Naive thymus-derived CD4-positive, alpha-beta T cell (primary cell): ENCODE measurements at regions of chr10 and their contacts with region 1.

Region 1: GRCh38 chr10:78302989-78303854 is 269.6 kb downstream of the RPS24 start:
- DNase-seq: peak; percentile 89 to 98 (median 94)
- ATAC-seq: peak; percentile 92
- H3K4me3 ChIP-seq: peak overlapping the region; percentile 92
- H3K4me3 Mint-ChIP-seq: peak overlapping the region; percentile 90 to 99 (median 96)
- H3K27ac ChIP-seq: peak overlapping the region; percentile 87
- H3K27ac Mint-ChIP-seq: peak overlapping the region; percentile 94 to 99 (median 97)
- H3K4me1 ChIP-seq: peaks cover 10 to 11% of the 10 kb centered on the region in 2 donors
- H3K4me1 Mint-ChIP-seq: peaks cover 6 to 34% (median 19%) of the 10 kb centered on the region in 7 donors
- H3K27me3 ChIP-seq: no peaks in the 10 kb centered on the region
- H3K27me3 Mint-ChIP-seq: peaks cover 0 to 23% (median 0%) of the 10 kb centered on the region in 5 donors

Region 2: GRCh38 chr10:78029269-78030226 is 273.7 kb before region 1 on chr10 and contains the start of gene POLR3A:
- CTCF ChIA-PET with region 1: no interaction called
- POLR2A ChIA-PET with region 1: interaction called, 3 read pairs
- intact Hi-C with region 1: loop called (anchors 1 kb)
- DNase-seq: peak; percentile 79 to 94 (median 90)
- ATAC-seq: peak; percentile 77
- H3K4me3 ChIP-seq: peak within 1 kb of the TSS; percentile 99
- H3K4me3 Mint-ChIP-seq: peak within 1 kb of the TSS; percentile 92 to 100 (median 99)
- H3K27ac ChIP-seq: peak within 1 kb of the TSS; percentile 89
- H3K27ac Mint-ChIP-seq: peak within 1 kb of the TSS; percentile 88 to 99 (median 95)
- H3K4me1 ChIP-seq: peaks cover 12 to 19% of the 10 kb centered on the region in 2 donors
- H3K4me1 Mint-ChIP-seq: peaks cover 22 to 50% (median 37%) of the 10 kb centered on the region in 7 donors
- H3K27me3 ChIP-seq: no peaks in the 10 kb centered on the region
- H3K27me3 Mint-ChIP-seq: no peaks in the 10 kb centered on the region
- total RNA-seq, gene POLR3A: 12.0 to 20.9 (median 19.0) TPM

Region 3: DNA sequence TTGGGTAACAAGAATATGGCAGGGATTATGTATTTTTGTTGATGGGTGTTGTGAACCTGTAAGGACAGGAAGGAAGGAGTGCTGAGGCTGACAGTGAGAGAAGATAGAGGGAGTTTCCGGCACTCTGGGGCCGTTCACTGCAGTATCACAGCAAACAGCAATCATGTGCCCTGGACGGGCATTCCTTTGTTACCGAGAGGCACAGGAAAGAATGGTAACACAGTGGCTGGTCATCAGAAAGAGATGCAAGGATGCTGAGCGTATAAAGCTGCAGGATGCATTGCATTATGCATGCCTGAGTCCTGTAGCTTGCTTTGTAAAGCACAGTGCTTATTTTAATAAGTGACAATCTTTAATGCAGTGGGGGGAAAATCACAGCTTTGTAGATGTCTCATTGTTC is 17.3 kb after region 1 on chr10:
- CTCF ChIA-PET with region 1: interaction called, 6 read pairs
- POLR2A ChIA-PET with region 1: interaction called, 5 read pairs
- intact Hi-C with region 1: loop called in 1 of 2 experiments (anchors 1 kb)
- DNase-seq: peak in 3 of 9 donors; percentile 13 to 28 (median 13)
- ATAC-seq: peak; percentile 73
- H3K4me3 ChIP-seq: no peak overlapping the region
- H3K4me3 Mint-ChIP-seq: peak overlapping the region; percentile 6 to 61 (median 36)
- H3K27ac ChIP-seq: no peak overlapping the region
- H3K27ac Mint-ChIP-seq: peak overlapping the region; percentile 0 to 79 (median 60)
- H3K4me1 ChIP-seq: peaks cover 0 to 13% of the 10 kb centered on the region in 2 donors
- H3K4me1 Mint-ChIP-seq: peaks cover 13 to 33% (median 23%) of the 10 kb centered on the region in 7 donors
- H3K27me3 ChIP-seq: no peaks in the 10 kb centered on the region
- H3K27me3 Mint-ChIP-seq: peaks cover 0 to 2% (median 0%) of the 10 kb centered on the region in 5 donors

Region 4: DNA sequence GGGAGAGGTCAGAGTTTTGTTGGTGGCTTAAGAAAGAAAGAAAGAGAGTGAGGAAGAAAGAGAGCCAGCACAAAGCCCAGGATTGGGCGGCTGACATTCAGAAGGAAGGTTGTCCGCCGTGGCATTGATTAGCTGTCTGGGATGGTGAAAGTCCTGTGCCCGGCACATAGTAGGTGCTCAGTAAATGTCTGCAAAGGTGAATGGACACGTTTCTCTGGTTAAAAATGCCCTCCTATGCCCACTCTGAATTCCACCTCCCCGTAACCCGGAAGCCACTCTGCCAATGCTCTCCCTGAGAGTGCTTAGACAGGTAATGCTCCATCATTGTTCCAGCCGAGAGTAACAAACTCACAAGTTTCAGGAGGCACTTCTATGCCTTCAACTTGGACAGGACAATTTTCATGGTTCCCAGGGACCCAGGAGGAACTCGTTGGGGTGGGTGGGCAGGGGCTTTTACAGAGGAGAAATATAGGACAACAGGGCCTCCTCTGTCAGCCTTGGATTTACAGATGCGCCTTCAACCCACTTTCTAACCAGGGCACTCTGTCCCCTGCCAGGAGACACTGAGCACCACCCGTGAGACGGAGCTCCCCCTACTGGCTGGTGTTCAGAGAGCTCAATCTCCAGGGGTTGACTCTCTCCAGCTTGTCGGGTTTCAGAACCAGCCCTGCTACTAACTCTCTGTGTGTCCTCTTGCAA is 354.1 kb after region 1 on chr10:
- CTCF ChIA-PET with region 1: no interaction called
- POLR2A ChIA-PET with region 1: no interaction called
- intact Hi-C with region 1: loop called (anchors 1 kb)
- DNase-seq: peak; percentile 12 to 70 (median 53)
- ATAC-seq: peak; percentile 85
- H3K4me3 ChIP-seq: no peak overlapping the region
- H3K4me3 Mint-ChIP-seq: no peak overlapping the region
- H3K27ac ChIP-seq: no peak overlapping the region
- H3K27ac Mint-ChIP-seq: no peak overlapping the region
- H3K4me1 ChIP-seq: no peaks in the 10 kb centered on the region
- H3K4me1 Mint-ChIP-seq: peaks cover 0 to 1% (median 0%) of the 10 kb centered on the region in 7 donors
- H3K27me3 ChIP-seq: no peaks in the 10 kb centered on the region
- H3K27me3 Mint-ChIP-seq: peaks cover 7 to 25% (median 10%) of the 10 kb centered on the region in 5 donors

Region 5: DNA sequence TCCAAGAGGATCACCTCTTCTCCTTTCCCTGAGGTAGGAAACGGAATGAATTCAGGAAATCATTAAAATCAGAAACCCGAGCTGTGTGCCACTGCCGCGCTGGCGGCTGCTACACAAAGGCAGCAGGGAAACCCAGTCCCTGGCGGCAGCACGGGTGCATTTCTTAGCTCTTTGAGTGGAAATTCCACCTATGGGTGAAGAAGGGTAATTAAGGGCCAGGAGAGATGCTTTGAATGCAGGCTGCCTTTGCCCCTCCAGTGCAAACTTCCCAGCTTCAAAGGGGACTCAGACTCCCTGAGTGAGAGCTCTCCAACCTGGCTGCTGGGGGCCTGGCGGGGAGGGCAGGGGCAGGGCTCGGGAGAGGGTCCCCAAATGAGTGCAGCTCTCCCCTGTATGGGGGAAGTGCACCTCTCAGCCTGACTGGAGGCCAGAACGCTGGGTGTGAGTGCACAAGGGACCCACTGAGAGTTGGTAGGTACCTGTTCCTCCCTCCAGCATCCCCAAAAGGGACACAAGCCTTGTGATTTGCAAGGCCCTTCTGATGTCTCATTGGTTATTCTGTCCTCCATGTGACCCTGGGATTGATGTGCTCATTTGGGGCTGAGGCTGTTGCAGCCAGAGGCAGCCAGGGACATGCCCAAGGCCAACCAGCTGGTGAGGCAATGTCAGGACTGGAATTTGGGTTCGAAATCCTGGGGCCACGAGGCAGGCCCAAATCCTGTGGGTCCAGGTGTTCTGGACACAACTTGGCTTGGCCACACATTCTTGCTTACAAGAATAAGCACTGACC is 749.3 kb after region 1 on chr10:
- CTCF ChIA-PET with region 1: no interaction called
- POLR2A ChIA-PET with region 1: no interaction called
- intact Hi-C with region 1: loop called (anchors 1 to 2 kb)
- DNase-seq: peak in 7 of 9 donors; percentile 52 to 76 (median 63)
- ATAC-seq: peak; percentile 75
- H3K4me3 ChIP-seq: no peak overlapping the region
- H3K4me3 Mint-ChIP-seq: peak overlapping the region in 4 of 10 donors; percentile 16 to 48 (median 38)
- H3K27ac ChIP-seq: no peak overlapping the region
- H3K27ac Mint-ChIP-seq: peak overlapping the region in 3 of 9 donors; percentile 30 to 81 (median 53)
- H3K4me1 ChIP-seq: peaks cover 17 to 30% of the 10 kb centered on the region in 2 donors
- H3K4me1 Mint-ChIP-seq: peaks cover 25 to 56% (median 46%) of the 10 kb centered on the region in 7 donors
- H3K27me3 ChIP-seq: no peaks in the 10 kb centered on the region
- H3K27me3 Mint-ChIP-seq: no peaks in the 10 kb centered on the region

Region 6: DNA sequence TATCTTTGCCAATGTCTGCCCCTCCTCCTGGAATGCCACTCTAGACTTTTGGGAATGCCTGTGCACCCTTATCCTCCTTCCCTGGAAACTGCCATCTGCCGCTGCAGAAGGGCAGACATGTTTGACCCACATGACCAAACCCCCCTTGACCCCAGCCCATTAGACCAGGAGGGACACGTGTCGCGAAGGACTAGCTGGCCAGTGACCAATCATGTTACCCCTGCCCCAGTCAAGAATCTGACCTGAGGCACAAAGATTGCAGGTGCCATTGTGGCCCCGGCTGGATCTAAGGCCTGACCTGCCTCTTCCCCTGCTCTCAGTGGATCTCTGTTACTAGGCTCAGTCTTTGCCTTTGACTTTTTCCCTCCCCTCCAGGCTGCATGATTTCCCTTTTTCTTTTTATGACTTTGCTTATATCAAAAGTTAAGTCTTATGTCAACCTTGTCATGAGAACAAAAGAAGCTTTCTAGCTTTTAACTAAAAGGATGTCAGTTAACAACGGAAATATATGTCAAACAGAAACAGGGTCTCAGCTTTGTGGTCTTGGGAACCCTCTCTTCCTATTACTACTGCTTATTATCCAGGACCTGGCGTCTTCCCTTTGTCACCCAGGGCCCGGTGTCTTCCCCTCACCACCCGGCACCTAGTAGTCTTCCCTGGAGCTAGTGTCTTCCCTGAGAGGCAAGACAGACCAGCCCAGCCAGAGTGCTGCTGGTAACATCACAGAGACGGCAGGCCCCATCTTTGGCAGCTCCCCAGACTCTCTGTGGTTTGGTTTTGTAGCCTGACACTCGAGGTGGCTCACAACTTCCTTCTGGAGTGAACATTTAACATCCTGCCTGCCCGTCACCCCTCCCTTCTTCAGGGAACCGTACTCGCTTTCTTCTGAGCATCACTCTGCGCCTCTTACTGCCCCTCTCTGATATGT is 1019.7 kb after region 1 on chr10:
- CTCF ChIA-PET with region 1: no interaction called
- POLR2A ChIA-PET with region 1: no interaction called
- intact Hi-C with region 1: loop called in 1 of 2 experiments (anchors 10 kb)
- DNase-seq: peak; percentile 53 to 92 (median 90)
- ATAC-seq: peak; percentile 90
- H3K4me3 ChIP-seq: peak overlapping the region; percentile 20
- H3K4me3 Mint-ChIP-seq: peak overlapping the region; percentile 70 to 88 (median 80)
- H3K27ac ChIP-seq: peak overlapping the region; percentile 65
- H3K27ac Mint-ChIP-seq: peak overlapping the region; percentile 77 to 99 (median 94)
- H3K4me1 ChIP-seq: peaks cover 58 to 63% of the 10 kb centered on the region in 2 donors
- H3K4me1 Mint-ChIP-seq: peaks cover 50 to 74% (median 68%) of the 10 kb centered on the region in 7 donors
- H3K27me3 ChIP-seq: no peaks in the 10 kb centered on the region
- H3K27me3 Mint-ChIP-seq: no peaks in the 10 kb centered on the region

Region 7: GRCh38 chr10:80187465-80188409 is 1884.5 kb after region 1 on chr10:
- CTCF ChIA-PET with region 1: no interaction called
- POLR2A ChIA-PET with region 1: no interaction called
- intact Hi-C with region 1: loop called in 1 of 2 experiments (anchors 5 kb)
- DNase-seq: peak; percentile 58 to 96 (median 93)
- ATAC-seq: peak; percentile 94
- H3K4me3 ChIP-seq: peak overlapping the region; percentile 37
- H3K4me3 Mint-ChIP-seq: peak overlapping the region; percentile 77 to 95 (median 85)
- H3K27ac ChIP-seq: peak overlapping the region; percentile 84
- H3K27ac Mint-ChIP-seq: peak overlapping the region; percentile 90 to 98 (median 93)
- H3K4me1 ChIP-seq: peaks cover 48 to 81% of the 10 kb centered on the region in 2 donors
- H3K4me1 Mint-ChIP-seq: peaks cover 74 to 91% (median 90%) of the 10 kb centered on the region in 7 donors
- H3K27me3 ChIP-seq: no peaks in the 10 kb centered on the region
- H3K27me3 Mint-ChIP-seq: no peaks in the 10 kb centered on the region